ENCODE measurements at regions of chr17 and their contacts with region 1.

Region 1: GRCh38 chr17:13490906-13491482 is 110.7 kb downstream of the HS3ST3A1 start:
- DNase-seq: no peak
- H3K4me3 ChIP-seq: no peak overlapping the region
- H3K27ac ChIP-seq: no peak overlapping the region
- H3K4me1 ChIP-seq: no peaks in the 10 kb centered on the region
- H3K27me3 ChIP-seq: no peaks in the 10 kb centered on the region
- CTCF ChIP-seq: no peak

Region 2: DNA sequence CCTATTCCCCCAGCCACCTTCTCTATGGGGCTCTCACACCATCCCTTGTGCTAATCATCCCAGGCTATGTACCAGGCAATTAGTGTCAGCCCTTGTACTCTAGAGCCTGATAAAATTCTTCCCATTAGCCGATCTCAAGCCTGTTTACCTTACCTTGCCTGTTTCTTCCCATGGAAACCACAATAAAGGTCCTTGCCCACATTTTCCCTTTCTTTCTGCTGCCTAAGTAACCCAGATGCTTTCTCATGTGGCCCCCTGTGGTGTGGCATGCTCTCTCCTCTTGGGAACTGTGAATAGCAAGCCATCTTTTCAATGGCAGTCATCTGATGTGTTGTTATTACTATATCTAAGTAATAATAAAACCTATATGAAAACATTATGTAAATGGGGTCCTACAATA is 207.4 kb before region 1 on chr17:
- intact Hi-C with region 1: no loop called
- DNase-seq: no peak
- H3K4me3 ChIP-seq: no peak overlapping the region
- H3K27ac ChIP-seq: no peak overlapping the region
- H3K4me1 ChIP-seq: no peaks in the 10 kb centered on the region
- H3K27me3 ChIP-seq: no peaks in the 10 kb centered on the region
- CTCF ChIP-seq: no peak

Region 3: GRCh38 chr17:14790521-14790920 is 1299.5 kb after region 1 on chr17:
- intact Hi-C with region 1: loop called (anchors 10 kb)
- DNase-seq: no peak
- H3K4me3 ChIP-seq: no peak overlapping the region
- H3K27ac ChIP-seq: no peak overlapping the region
- H3K4me1 ChIP-seq: no peaks in the 10 kb centered on the region
- H3K27me3 ChIP-seq: peaks cover 57% of the 10 kb centered on the region
- CTCF ChIP-seq: no peak